AG04450 (cell line): ENCODE measurements at regions of chr5 and their contacts with region 1.

Region 1: GRCh38 chr5:134411546-134412266 is at the start of gene CDKN2AIPNL:
- DNase-seq: peak; percentile 61
- H3K4me3 ChIP-seq: peak within 1 kb of the TSS; percentile 79
- H3K27ac ChIP-seq: peak within 1 kb of the TSS; percentile 39
- H3K27me3 ChIP-seq: no peaks in the 10 kb centered on the region
- CTCF ChIP-seq: peak; percentile 67
- polyA plus RNA-seq, gene CDKN2AIPNL: 16.7 and 20.8 TPM in 2 replicates

Region 2: DNA sequence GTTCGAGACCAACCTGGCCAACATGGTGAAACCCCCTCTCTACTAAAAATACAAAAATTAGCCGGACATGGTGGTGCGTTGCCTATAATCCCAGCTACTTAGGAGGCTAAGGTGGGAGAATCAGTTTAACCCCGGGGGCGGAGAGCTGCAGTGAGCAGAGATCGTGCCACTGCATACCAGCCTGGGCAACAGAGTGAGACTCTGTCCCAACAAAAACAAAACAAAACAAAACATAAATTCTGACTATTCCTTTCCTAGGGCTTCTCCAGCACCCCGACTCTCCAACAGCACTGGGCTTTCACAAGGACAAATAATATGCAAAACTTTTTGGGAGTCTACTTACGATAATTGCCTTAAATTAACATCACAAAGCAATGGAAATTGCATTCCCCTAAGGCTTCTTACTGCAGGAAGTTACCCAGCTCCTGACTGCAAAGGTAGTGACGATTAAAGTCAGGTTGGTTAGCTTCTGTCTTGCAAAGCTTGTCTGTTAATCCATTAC is 15.9 kb after region 1 on chr5:
- CTCF ChIA-PET with region 1: interaction called, 16 read pairs
- POLR2A ChIA-PET with region 1: no interaction called
- DNase-seq: no peak
- H3K4me3 ChIP-seq: no peak overlapping the region
- H3K27ac ChIP-seq: no peak overlapping the region
- H3K27me3 ChIP-seq: no peaks in the 10 kb centered on the region
- CTCF ChIP-seq: no peak

Region 3: GRCh38 chr5:134465816-134466240 is 54.1 kb after region 1 on chr5:
- CTCF ChIA-PET with region 1: interaction called, 12 read pairs
- POLR2A ChIA-PET with region 1: interaction called, 13 read pairs
- DNase-seq: peak; percentile 72
- H3K4me3 ChIP-seq: peak overlapping the region; percentile 54
- H3K27ac ChIP-seq: peak overlapping the region; percentile 94
- H3K27me3 ChIP-seq: no peaks in the 10 kb centered on the region
- CTCF ChIP-seq: 0 out of 2 replicates have a peak, but pooled peaks have one; percentile 2